MCF 10A (cell line): ENCODE measurements at regions of chr2 and their contacts with region 1.

Region 1: DNA sequence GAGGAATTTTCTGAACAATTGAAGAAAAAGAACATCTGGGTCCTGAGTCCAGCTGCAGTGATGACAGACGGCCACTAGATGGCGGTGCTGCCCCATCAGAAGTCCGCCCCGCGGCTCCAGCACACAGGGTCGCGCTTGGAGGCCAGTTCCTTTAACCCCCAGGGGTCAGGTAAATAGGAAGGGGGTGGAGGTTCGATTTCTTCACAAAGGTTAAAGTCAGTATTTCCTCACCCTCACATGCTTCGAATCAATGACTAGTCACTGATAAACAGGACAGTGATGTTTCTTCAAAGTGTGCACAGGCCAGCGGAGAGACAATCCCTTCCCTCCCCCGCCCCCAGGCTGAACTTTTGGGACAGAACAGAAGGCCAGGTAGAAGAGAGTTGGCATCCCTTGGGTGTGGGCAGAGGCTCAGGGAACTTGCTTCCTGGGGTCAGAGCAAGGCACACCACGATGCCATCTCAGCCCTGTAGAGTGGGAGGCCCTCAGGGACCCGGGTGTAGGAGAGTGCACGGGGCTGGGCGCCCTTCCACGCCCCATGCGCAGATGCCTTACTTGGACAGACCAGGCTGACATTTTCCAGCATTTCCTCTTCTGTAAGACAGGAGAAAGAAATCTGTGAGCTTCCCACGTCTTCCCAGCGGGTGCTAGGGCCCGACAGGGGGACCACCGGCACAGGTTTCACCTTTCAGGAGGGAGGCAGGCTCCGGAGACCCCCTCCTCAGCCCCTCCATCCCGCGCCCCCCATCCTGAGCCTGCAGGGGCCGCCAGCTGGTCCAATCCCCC is 722 bp downstream of the APOB start:
- DNase-seq: peak; percentile 44
- H3K4me3 Mint-ChIP-seq: no peak overlapping the region
- H3K27ac Mint-ChIP-seq: no peak overlapping the region
- H3K4me1 Mint-ChIP-seq: peaks cover 14% of the 10 kb centered on the region
- H3K27me3 Mint-ChIP-seq: no peaks in the 10 kb centered on the region
- CTCF ChIP-seq: peak; percentile 98

Region 2: GRCh38 chr2:20852139-20852538 is 191.0 kb before region 1 on chr2:
- CTCF ChIA-PET with region 1: no interaction called
- POLR2A ChIA-PET with region 1: no interaction called
- intact Hi-C with region 1: no loop called
- DNase-seq: no peak
- H3K4me3 Mint-ChIP-seq: no peak overlapping the region
- H3K27ac Mint-ChIP-seq: no peak overlapping the region
- H3K4me1 Mint-ChIP-seq: no peaks in the 10 kb centered on the region
- H3K27me3 Mint-ChIP-seq: peaks cover 15% of the 10 kb centered on the region
- CTCF ChIP-seq: no peak

Region 3: DNA sequence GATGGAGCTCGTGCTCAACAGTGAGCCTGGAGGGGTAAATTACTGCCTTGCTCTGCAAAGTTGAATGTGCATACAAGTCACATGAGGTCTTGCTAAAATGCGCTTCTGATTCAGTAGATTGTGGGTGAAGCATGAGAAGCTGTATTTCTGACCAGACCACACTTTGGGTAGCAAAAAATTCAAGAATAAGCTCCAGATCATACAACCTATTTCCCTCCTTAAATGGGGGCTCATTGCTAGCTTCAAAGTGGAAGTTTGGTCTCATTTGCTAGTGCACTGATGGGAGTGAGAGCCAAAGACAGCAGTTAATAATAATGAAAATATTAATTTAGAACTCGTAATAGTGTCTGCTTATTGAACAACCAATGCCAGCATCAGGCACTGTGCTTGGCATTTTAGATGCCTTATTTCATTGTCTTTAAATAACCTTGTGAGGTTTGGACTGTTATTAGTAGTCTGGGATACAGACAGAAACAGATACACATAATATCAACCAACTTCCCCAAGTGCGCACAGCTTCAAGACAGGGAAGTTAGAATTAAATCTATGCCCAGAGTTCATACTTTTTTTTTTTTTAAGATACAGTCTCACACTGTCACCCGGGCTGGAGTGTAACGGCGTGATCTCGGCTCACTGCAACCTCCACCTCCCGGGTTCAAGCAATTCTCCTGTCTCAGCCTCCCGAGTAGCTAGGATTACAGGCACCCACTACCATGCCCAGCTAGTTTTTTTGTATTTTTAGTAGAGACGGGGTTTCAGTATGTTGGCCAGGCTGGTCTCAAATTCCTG is 17.3 kb before region 1 on chr2:
- CTCF ChIA-PET with region 1: interaction called, 24 read pairs
- POLR2A ChIA-PET with region 1: no interaction called
- intact Hi-C with region 1: no loop called
- DNase-seq: no peak
- H3K4me3 Mint-ChIP-seq: no peak overlapping the region
- H3K27ac Mint-ChIP-seq: no peak overlapping the region
- H3K4me1 Mint-ChIP-seq: no peaks in the 10 kb centered on the region
- H3K27me3 Mint-ChIP-seq: peaks cover 24% of the 10 kb centered on the region
- CTCF ChIP-seq: no peak

Region 4: GRCh38 chr2:21032338-21033236 is 10.6 kb before region 1 on chr2:
- CTCF ChIA-PET with region 1: interaction called, 24 read pairs
- POLR2A ChIA-PET with region 1: no interaction called
- intact Hi-C with region 1: no loop called
- DNase-seq: no peak
- H3K4me3 Mint-ChIP-seq: no peak overlapping the region
- H3K27ac Mint-ChIP-seq: no peak overlapping the region
- H3K4me1 Mint-ChIP-seq: no peaks in the 10 kb centered on the region
- H3K27me3 Mint-ChIP-seq: peaks cover 17% of the 10 kb centered on the region
- CTCF ChIP-seq: no peak

Region 5: DNA sequence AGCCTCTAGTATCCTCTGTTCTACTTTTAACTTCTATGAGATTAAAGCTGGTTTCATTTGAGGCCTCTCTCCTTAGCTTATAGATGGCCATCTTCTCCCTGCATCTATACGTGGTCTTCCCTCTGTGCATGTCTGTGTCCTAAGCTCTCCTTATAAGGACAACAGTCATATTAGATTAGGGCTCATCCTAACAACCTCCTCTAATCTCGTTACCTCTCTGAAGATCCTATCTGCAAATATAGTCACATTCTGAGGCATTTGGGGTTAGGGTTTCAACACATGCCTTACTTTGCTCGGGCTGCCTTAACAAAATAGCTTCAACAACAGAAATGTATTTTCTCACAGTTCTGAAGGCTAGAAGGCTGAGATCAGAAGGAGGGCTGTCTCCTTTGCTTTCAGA is 12.3 kb after region 1 on chr2:
- CTCF ChIA-PET with region 1: interaction called, 10 read pairs
- POLR2A ChIA-PET with region 1: no interaction called
- intact Hi-C with region 1: no loop called
- DNase-seq: no peak
- H3K4me3 Mint-ChIP-seq: no peak overlapping the region
- H3K27ac Mint-ChIP-seq: no peak overlapping the region
- H3K4me1 Mint-ChIP-seq: no peaks in the 10 kb centered on the region
- H3K27me3 Mint-ChIP-seq: peaks cover 27% of the 10 kb centered on the region
- CTCF ChIP-seq: no peak

Region 6: GRCh38 chr2:21118302-21118920 is 75.3 kb after region 1 on chr2:
- CTCF ChIA-PET with region 1: interaction called, 110 read pairs
- POLR2A ChIA-PET with region 1: no interaction called
- intact Hi-C with region 1: loop called (anchors 1 kb)
- DNase-seq: peak; percentile 40
- H3K4me3 Mint-ChIP-seq: no peak overlapping the region
- H3K27ac Mint-ChIP-seq: no peak overlapping the region
- H3K4me1 Mint-ChIP-seq: no peaks in the 10 kb centered on the region
- H3K27me3 Mint-ChIP-seq: peaks cover 57% of the 10 kb centered on the region
- CTCF ChIP-seq: peak; percentile 49

Region 7: GRCh38 chr2:21165350-21165749 is 122.2 kb after region 1 on chr2:
- CTCF ChIA-PET with region 1: interaction called, 12 read pairs
- POLR2A ChIA-PET with region 1: no interaction called
- intact Hi-C with region 1: loop called (anchors 1 kb)
- DNase-seq: no peak
- H3K4me3 Mint-ChIP-seq: no peak overlapping the region
- H3K27ac Mint-ChIP-seq: no peak overlapping the region
- H3K4me1 Mint-ChIP-seq: no peaks in the 10 kb centered on the region
- H3K27me3 Mint-ChIP-seq: peaks cover 21% of the 10 kb centered on the region
- CTCF ChIP-seq: peak; percentile 21

Region 8: DNA sequence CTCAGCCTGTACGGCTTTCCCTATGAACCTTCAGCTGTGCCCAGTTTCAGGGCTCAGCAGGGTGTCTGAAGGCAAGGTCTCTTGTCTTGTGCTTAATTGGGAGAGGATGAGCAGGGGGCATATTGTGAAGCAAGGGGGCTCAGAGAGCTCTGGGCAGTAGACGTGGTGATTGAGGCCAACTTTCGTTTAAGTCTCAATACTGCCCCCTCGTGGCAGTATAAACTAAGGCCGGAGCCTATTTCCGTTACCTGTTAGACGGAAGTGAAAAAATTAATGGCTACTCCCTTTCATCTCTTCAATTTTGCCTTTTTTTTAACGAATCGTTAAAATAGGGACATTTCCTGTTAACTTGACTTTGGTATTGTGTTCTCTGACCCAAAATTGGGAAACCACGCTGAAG is 274.0 kb after region 1 on chr2:
- CTCF ChIA-PET with region 1: interaction called, 6 read pairs
- POLR2A ChIA-PET with region 1: no interaction called
- intact Hi-C with region 1: loop called (anchors 1 kb)
- DNase-seq: peak; percentile 68
- H3K4me3 Mint-ChIP-seq: no peak overlapping the region
- H3K27ac Mint-ChIP-seq: no peak overlapping the region
- H3K4me1 Mint-ChIP-seq: no peaks in the 10 kb centered on the region
- H3K27me3 Mint-ChIP-seq: peaks cover 11% of the 10 kb centered on the region
- CTCF ChIP-seq: peak; percentile 64